ENCODE measurements at regions of chr15 and their contacts with region 1.

Region 1: GRCh38 chr15:93030430-93031105 is 58.4 kb downstream of the RGMA start:
- DNase-seq: peak; percentile 79
- ATAC-seq: peak; percentile 88
- H3K4me3 Mint-ChIP-seq: no peak overlapping the region
- H3K27ac Mint-ChIP-seq: no peak overlapping the region
- H3K4me1 Mint-ChIP-seq: peaks cover 36% of the 10 kb centered on the region
- H3K27me3 Mint-ChIP-seq: no peaks in the 10 kb centered on the region
- CTCF ChIP-seq: peak; percentile 91

Region 2: GRCh38 chr15:93018580-93018979 is 12.0 kb before region 1 on chr15:
- CTCF ChIA-PET with region 1: interaction called, 63 read pairs
- POLR2A ChIA-PET with region 1: interaction called, 5 read pairs
- intact Hi-C with region 1: no loop called
- DNase-seq: no peak
- ATAC-seq: no peak
- H3K4me3 Mint-ChIP-seq: no peak overlapping the region
- H3K27ac Mint-ChIP-seq: peak overlapping the region; percentile 75
- H3K4me1 Mint-ChIP-seq: peaks cover 63% of the 10 kb centered on the region
- H3K27me3 Mint-ChIP-seq: no peaks in the 10 kb centered on the region
- CTCF ChIP-seq: no peak

Region 3: GRCh38 chr15:93044301-93045190 is 14.0 kb after region 1 on chr15:
- CTCF ChIA-PET with region 1: interaction called, 11 read pairs
- POLR2A ChIA-PET with region 1: no interaction called
- intact Hi-C with region 1: no loop called
- DNase-seq: no peak
- ATAC-seq: no peak
- H3K4me3 Mint-ChIP-seq: no peak overlapping the region
- H3K27ac Mint-ChIP-seq: no peak overlapping the region
- H3K4me1 Mint-ChIP-seq: peaks cover 15% of the 10 kb centered on the region
- H3K27me3 Mint-ChIP-seq: no peaks in the 10 kb centered on the region
- CTCF ChIP-seq: no peak

Region 4: DNA sequence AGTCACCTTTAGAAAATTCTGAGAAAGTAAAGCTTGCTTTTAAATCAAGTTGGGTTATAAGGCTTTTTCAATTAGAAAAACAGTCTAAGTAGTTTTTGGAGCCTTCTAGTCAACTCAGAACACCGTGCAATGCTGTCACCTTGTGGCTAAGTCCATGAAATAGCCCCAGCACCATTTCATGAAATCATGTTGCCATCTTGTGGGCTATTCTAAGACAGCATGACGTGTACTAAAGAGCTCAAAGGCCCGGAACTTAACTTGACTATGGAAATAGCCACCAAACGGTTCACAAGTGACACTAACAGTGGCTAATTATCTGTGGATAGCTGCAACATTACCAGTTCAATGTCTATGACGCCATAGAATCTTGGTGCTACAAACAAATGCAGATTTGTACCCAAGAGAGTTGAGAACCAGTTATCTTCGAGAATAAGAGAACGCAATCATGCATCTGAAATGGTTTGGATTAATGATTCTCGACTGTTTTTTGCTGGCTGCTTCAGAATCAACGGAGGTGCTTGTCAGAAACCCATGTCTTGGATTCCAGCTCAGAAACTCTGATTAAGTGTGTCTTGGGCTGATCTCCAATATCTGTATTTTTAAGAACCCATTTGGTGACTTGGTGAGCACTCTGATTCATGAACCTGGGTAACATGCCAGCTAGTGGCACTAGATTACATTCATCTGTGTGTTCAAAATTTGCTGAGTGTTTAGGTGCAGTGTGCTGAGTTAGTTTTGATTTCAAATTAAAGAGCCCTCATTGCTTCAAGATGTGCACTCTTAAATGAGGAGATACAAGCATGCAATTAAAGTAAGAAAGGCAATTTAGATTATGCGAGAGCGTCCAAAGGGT is 1089.6 kb after region 1 on chr15:
- CTCF ChIA-PET with region 1: interaction called, 29 read pairs
- POLR2A ChIA-PET with region 1: no interaction called
- intact Hi-C with region 1: no loop called
- DNase-seq: peak; percentile 70
- ATAC-seq: peak; percentile 100
- H3K4me3 Mint-ChIP-seq: no peak overlapping the region
- H3K27ac Mint-ChIP-seq: no peak overlapping the region
- H3K4me1 Mint-ChIP-seq: no peaks in the 10 kb centered on the region
- H3K27me3 Mint-ChIP-seq: no peaks in the 10 kb centered on the region
- CTCF ChIP-seq: peak; percentile 85

Measured in activated CD8-positive, alpha-beta T cell treated with anti-CD3 and anti-CD28 coated beads for 36 hours (primary cell).